Gastrocnemius medialis (tissue), 4 donors: ENCODE measurements at regions of chr10 and their contacts with region 1.

Region 1: GRCh38 chr10:63521416-63522276 is 445 bp downstream of the REEP3 start:
- DNase-seq: peak; percentile 42 to 64
- ATAC-seq: peak; percentile 81 to 86
- H3K4me3 ChIP-seq: peak overlapping the region; percentile 73 to 88 (median 80)
- H3K27ac ChIP-seq: peak overlapping the region; percentile 95 to 98 (median 98)
- H3K4me1 ChIP-seq: peaks cover 51 to 52% of the 10 kb centered on the region in 2 donors
- H3K27me3 ChIP-seq: no peaks in the 10 kb centered on the region
- CTCF ChIP-seq: peak in 1 of 5 experiments; percentile 6
- POLR2A ChIP-seq: peak; percentile 77 to 81

Region 2: DNA sequence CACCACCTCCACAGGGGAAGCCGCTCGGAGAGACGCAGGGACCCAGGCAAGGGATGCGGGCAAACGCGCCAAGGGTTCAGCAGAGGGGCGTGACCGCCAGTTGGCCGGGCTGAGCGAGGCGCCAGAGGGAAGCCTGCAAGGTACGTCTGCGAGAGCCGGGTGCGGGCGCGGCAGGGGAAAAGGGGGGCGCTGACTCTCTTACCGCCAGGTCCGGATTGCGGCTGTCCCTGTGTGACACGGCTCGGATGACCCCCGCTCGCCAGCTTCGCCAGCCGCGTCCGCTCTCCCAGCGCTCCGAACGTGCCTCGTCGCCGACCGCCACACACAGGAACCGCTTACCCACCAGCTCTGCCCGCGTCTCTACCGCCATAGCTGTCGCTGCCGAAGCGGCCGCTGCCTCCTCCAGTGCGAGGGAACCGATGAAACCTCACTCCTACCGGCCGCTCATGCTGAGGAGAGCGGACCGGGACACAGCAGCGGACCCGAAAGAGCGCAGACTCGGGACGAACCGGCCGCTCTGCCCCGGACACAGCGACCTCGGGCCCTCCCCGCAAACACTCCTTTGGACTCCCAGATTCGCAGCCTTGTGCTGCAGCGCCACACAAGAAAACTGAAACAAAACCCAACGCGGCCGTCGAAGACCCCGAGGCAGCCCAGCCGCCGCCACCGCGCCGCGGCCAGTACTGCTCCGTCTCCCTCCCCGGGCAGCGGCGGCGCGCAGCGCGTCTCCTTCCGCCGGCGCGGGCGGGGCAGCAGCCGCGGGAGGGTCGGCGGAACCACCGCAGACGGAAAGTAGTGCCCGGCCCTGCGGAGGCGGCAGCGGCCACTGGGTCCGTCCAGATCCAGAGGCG is 56.1 kb before region 1 on chr10 and contains the start of gene JMJD1C:
- in situ Hi-C with region 1: loop called in 1 of 4 experiments (anchors 5 kb)
- intact Hi-C with region 1: loop called (anchors 2 kb)
- DNase-seq: peak; percentile 48 to 78
- ATAC-seq: peak; percentile 84 to 88
- H3K4me3 ChIP-seq: peak within 1 kb of the TSS; percentile 82 to 95 (median 92)
- H3K27ac ChIP-seq: peak within 1 kb of the TSS; percentile 93 to 95 (median 94)
- H3K4me1 ChIP-seq: peaks cover 26% of the 10 kb centered on the region in 2 donors
- H3K27me3 ChIP-seq: no peaks in the 10 kb centered on the region
- CTCF ChIP-seq: peak in 2 of 5 experiments; percentile 13 to 20
- POLR2A ChIP-seq: peak; percentile 79 to 82
- total RNA-seq, gene JMJD1C: 22.5 to 74.1 (median 46.9) TPM

Region 3: GRCh38 chr10:63720072-63720537 is 198.5 kb after region 1 on chr10:
- in situ Hi-C with region 1: loop called in 1 of 4 experiments (anchors 25 kb)
- intact Hi-C with region 1: no loop called
- DNase-seq: no peak
- ATAC-seq: peak; percentile 27 to 32
- H3K4me3 ChIP-seq: peak overlapping the region in 1 of 4 donors; percentile 11
- H3K27ac ChIP-seq: peak overlapping the region in 3 of 4 donors; percentile 33 to 61 (median 37)
- H3K4me1 ChIP-seq: peaks cover 10 to 19% of the 10 kb centered on the region in 2 donors
- H3K27me3 ChIP-seq: no peaks in the 10 kb centered on the region
- CTCF ChIP-seq: peak; percentile 88 to 99 (median 94)
- POLR2A ChIP-seq: no peak